ENCODE measurements at regions of chr4 and their contacts with region 1.

Region 1: DNA sequence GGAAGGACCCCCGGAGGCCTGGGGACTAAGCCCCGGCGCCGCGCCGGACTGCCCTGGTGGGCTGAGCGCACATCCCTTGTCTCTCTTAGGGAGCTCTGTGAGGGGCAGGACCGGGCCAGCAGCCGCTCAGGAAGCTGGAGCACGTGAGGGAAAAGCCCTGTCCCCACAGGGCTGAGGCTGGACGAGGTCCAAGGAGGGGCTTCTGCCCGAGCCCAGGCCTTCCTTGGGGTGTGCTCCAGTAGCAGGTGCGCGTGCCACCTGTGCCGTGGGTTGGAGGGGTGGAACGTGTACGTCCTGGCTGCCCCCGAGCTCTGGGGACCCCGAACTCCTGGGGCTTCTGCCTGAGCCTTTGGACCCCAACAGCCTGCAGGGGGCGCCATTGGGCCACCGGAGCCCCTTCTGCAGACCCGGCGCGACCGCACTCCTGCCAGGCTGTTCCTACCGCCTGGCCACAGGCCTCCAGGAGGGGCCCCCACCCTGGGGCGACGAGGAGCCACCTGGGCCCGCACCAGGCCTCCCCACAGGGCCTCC is 27.2 kb downstream of the TACC3 start:
- DNase-seq: peak; percentile 89
- H3K4me3 Mint-ChIP-seq: no peak overlapping the region
- H3K27ac Mint-ChIP-seq: no peak overlapping the region
- H3K4me1 Mint-ChIP-seq: no peaks in the 10 kb centered on the region
- H3K27me3 Mint-ChIP-seq: no peaks in the 10 kb centered on the region
- CTCF ChIP-seq: peak; percentile 78

Region 2: GRCh38 chr4:1809754-1810511 is 61.4 kb after region 1 on chr4:
- CTCF ChIA-PET with region 1: interaction called, 18 read pairs
- intact Hi-C with region 1: loop called (anchors 1 kb)
- DNase-seq: peak; percentile 86
- H3K4me3 Mint-ChIP-seq: no peak overlapping the region
- H3K27ac Mint-ChIP-seq: no peak overlapping the region
- H3K4me1 Mint-ChIP-seq: no peaks in the 10 kb centered on the region
- H3K27me3 Mint-ChIP-seq: no peaks in the 10 kb centered on the region
- CTCF ChIP-seq: peak; percentile 86

Measured in Calu3 (cell line).